Left cardiac atrium (tissue), 4 donors: ENCODE measurements at regions of chrX and their contacts with region 1.

Region 1: DNA sequence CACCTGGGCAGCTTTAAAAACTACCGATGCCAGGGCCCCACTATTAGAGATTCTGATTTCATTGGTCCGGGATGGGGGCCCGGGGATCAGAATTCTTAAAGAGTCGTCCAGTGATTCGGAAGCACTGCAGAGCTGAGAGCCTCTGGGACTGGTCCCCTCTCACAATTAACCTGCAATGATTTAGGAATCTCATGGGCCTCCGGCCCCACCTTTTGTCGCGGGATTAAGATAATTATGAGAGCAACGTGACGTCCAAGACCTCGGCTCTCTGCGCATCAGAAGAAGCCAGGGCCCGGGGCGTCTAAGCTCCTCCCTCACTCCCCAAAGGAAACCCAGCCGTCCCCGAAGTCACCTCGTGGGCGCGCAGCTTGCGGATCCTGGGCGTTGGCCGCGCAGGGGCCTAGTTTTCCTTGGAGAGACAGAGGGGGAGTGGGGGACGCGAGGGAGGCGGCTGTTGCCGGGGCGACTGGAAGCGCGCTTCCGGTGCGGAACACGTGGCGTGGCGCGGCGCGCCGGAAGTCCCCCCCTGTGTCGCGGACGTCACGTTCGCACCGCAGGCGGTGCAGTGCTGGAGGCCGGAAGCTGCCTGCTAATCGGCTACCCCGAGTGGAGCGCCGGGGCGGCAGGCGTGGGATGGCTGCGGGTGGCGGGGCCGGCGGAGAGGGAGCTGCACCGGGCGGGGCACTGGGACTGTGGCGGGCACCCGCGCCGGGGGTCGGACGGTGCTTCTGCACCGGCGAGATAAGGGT is at the start of gene GEMIN8:
- DNase-seq: peak; percentile 92
- ATAC-seq: peak; percentile 98 to 99
- total RNA-seq, gene GEMIN8: 8.7 to 9.2 TPM

Region 2: GRCh38 chrX:13506574-13506973 is 523.0 kb before region 1 on chrX:
- intact Hi-C with region 1: loop called (anchors 1 to 10 kb)
- DNase-seq: peak; percentile 43
- ATAC-seq: no peak

Region 3: GRCh38 chrX:13653022-13653693 is 376.4 kb before region 1 on chrX and contains the start of gene TCEANC:
- intact Hi-C with region 1: loop called (anchors 2 to 10 kb)
- DNase-seq: peak; percentile 98
- ATAC-seq: peak; percentile 99
- total RNA-seq, gene TCEANC: 2.9 to 5.4 TPM

Region 4: DNA sequence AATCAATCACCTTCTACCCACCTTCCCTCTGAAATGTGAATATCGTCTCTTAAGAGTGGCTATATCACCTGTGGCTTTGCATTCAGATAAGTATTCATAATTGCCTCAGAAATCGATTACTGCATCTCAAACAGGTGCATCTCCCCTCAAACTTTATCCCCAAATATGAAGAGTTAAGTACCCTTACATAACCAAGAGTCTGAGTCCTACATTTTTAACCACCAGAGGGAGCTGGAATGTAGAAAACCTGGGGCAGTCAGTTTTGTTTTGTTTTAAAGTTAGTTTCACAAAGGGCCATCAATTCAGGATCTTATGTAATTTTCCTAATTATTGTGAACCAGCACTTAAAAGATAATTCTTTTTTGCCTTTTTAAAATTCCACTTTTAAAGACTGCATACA is 371.0 kb before region 1 on chrX:
- intact Hi-C with region 1: loop called (anchors 2 to 10 kb)
- DNase-seq: no peak
- ATAC-seq: peak in 1 of 2 donors; percentile 61

Region 5: DNA sequence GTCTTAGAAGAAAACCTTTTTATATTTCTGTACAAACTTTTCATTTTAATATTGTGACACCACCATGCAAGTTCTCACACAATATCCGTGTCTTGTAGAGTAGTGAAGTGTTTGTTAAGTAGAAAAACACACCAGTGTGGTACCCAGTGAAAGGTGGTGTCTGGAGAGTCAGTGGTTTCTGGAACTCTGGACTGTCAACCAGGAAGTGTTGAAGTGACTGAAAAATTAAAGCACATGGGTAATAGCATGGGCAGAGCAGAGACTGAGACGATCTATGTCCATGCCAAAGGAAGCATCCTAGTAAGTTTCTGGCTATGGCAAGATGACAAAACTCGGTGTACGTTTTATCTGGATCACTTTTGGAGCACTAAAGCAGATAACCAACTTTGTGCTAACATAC is 318.5 kb before region 1 on chrX:
- intact Hi-C with region 1: no loop called
- DNase-seq: no peak
- ATAC-seq: no peak

Region 6: DNA sequence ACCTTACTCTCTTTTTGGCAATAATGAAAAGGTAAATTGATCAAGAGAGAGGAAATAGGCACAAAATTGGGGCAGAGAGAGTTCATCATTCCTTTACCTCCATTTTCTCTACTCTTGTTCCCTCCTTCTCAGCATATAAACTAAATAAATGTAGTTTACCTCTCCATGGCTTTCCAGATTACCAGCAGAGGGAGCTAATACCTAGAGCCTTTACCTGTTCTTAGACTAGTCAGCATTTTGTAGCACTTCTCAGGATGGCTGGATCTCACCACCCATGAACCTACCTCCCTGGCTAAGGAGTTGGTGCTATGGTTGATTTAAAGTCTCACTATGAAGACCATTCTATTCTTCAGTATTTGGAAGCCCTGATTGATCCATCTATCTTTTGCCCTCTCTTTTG is 279.4 kb before region 1 on chrX:
- intact Hi-C with region 1: loop called in 1 of 2 experiments (anchors 10 kb)
- DNase-seq: no peak
- ATAC-seq: peak in 1 of 2 donors; percentile 30

Region 7: GRCh38 chrX:14133912-14134311 is 104.3 kb after region 1 on chrX:
- intact Hi-C with region 1: no loop called
- DNase-seq: no peak
- ATAC-seq: no peak